Caco-2 (cell line): ENCODE measurements at regions of chr4 and their contacts with region 1.

Region 1: GRCh38 chr4:142544039-142544438 is 302.1 kb downstream of the INPP4B start:
- DNase-seq: no peak
- H3K4me3 ChIP-seq: no peak overlapping the region
- H3K4me3 Mint-ChIP-seq: no peak overlapping the region
- H3K27ac Mint-ChIP-seq: no peak overlapping the region
- H3K4me1 ChIP-seq: peaks cover 3% of the 10 kb centered on the region
- H3K4me1 Mint-ChIP-seq: peaks cover 2% of the 10 kb centered on the region
- H3K27me3 ChIP-seq: no peaks in the 10 kb centered on the region
- H3K27me3 Mint-ChIP-seq: no peaks in the 10 kb centered on the region
- CTCF ChIP-seq: no peak

Region 2: GRCh38 chr4:142497606-142498005 is 46.4 kb before region 1 on chr4:
- CTCF ChIA-PET with region 1: no interaction called
- POLR2A ChIA-PET with region 1: no interaction called
- intact Hi-C with region 1: no loop called
- DNase-seq: no peak
- H3K4me3 ChIP-seq: no peak overlapping the region
- H3K4me3 Mint-ChIP-seq: no peak overlapping the region
- H3K27ac Mint-ChIP-seq: no peak overlapping the region
- H3K4me1 ChIP-seq: peaks cover 29% of the 10 kb centered on the region
- H3K4me1 Mint-ChIP-seq: peaks cover 6% of the 10 kb centered on the region
- H3K27me3 ChIP-seq: no peaks in the 10 kb centered on the region
- H3K27me3 Mint-ChIP-seq: no peaks in the 10 kb centered on the region
- CTCF ChIP-seq: no peak

Region 3: DNA sequence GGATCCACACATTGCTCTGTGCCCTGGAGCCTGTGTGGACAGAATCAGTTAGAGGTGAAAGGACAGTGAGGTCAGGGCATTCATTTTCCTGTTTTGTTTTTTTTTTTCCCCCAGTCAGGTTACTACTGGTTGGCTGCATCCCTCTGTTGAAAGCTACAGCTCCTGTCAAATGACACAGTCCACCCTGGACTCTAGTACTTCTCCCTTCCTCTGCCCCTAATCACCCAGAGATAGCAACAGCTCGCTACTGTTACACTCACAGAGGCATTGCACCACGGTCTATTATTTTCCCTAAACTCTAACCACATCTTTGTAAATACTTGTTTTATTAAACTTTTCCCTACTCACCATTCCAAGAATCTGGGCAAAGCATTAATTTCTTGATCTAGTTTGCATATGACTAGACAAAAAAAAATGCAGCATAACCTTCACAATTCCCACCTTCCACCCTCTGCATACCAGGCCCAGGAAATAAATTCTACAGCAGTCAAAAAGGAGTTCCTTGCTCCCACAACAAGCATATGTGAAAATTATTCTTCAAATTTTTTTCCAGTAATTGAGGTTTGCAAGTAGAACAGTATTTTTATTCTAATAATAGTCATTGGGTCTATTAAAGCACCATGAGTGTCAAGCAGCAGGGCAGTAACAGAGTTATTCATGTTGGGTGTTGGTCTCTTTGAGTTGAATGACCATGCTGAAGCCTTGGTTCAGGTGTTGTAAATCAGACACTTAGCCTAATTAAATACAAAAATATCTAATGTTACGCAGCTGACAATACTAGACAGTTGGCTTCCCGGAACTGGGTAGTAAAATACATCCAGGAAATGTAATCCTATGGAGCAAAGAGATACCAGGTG is 27.1 kb before region 1 on chr4:
- CTCF ChIA-PET with region 1: no interaction called
- POLR2A ChIA-PET with region 1: no interaction called
- intact Hi-C with region 1: no loop called
- DNase-seq: no peak
- H3K4me3 ChIP-seq: no peak overlapping the region
- H3K4me3 Mint-ChIP-seq: no peak overlapping the region
- H3K27ac Mint-ChIP-seq: no peak overlapping the region
- H3K4me1 ChIP-seq: no peaks in the 10 kb centered on the region
- H3K4me1 Mint-ChIP-seq: no peaks in the 10 kb centered on the region
- H3K27me3 ChIP-seq: no peaks in the 10 kb centered on the region
- H3K27me3 Mint-ChIP-seq: no peaks in the 10 kb centered on the region
- CTCF ChIP-seq: no peak

Region 4: GRCh38 chr4:142558851-142559250 is 14.8 kb after region 1 on chr4:
- CTCF ChIA-PET with region 1: no interaction called
- POLR2A ChIA-PET with region 1: no interaction called
- intact Hi-C with region 1: loop called (anchors 2 kb)
- DNase-seq: peak in 1 of 2 experiments; percentile 24
- H3K4me3 ChIP-seq: no peak overlapping the region
- H3K4me3 Mint-ChIP-seq: no peak overlapping the region
- H3K27ac Mint-ChIP-seq: no peak overlapping the region
- H3K4me1 ChIP-seq: peaks cover 16% of the 10 kb centered on the region
- H3K4me1 Mint-ChIP-seq: peaks cover 12% of the 10 kb centered on the region
- H3K27me3 ChIP-seq: no peaks in the 10 kb centered on the region
- H3K27me3 Mint-ChIP-seq: no peaks in the 10 kb centered on the region
- CTCF ChIP-seq: no peak

Region 5: DNA sequence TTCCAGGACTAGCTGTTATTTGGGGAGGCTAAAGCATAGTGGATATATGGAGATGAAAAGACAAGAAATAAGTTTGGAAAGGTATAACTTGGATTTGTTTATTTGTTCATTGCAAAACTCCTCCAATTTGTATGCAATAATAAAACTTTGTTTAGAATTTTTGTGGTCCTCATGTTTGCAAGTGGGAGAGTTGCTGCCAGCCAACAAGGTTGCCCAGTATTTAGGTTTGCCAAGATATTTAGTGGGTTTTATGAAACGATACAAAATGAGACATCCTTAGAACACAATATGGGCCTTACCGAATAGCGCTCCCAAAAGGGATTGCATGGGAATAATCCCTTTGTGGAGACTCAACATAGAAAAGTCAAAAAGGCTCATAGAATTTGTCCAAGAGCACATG is 140.0 kb after region 1 on chr4:
- CTCF ChIA-PET with region 1: no interaction called
- POLR2A ChIA-PET with region 1: no interaction called
- intact Hi-C with region 1: no loop called
- DNase-seq: no peak
- H3K4me3 ChIP-seq: no peak overlapping the region
- H3K4me3 Mint-ChIP-seq: no peak overlapping the region
- H3K27ac Mint-ChIP-seq: no peak overlapping the region
- H3K4me1 ChIP-seq: no peaks in the 10 kb centered on the region
- H3K4me1 Mint-ChIP-seq: no peaks in the 10 kb centered on the region
- H3K27me3 ChIP-seq: no peaks in the 10 kb centered on the region
- H3K27me3 Mint-ChIP-seq: no peaks in the 10 kb centered on the region
- CTCF ChIP-seq: no peak